Ovary (tissue), 10 donors: ENCODE measurements at regions of chr12 and their contacts with region 1.

Region 1: GRCh38 chr12:97943364-97943763 is 480.8 kb downstream of the RMST start:
- DNase-seq: no peak
- H3K4me3 ChIP-seq: no peak overlapping the region
- H3K27ac ChIP-seq: no peak overlapping the region
- H3K4me1 ChIP-seq: no peaks in the 10 kb centered on the region
- H3K27me3 ChIP-seq: no peaks in the 10 kb centered on the region
- CTCF ChIP-seq: no peak
- EP300 ChIP-seq: no peak
- POLR2A ChIP-seq: no peak

Region 2: GRCh38 chr12:96729886-96730285 is 1213.5 kb before region 1 on chr12:
- intact Hi-C with region 1: loop called in 1 of 4 experiments (anchors 5 kb)
- DNase-seq: no peak
- H3K4me3 ChIP-seq: no peak overlapping the region
- H3K27ac ChIP-seq: no peak overlapping the region
- H3K4me1 ChIP-seq: no peaks in the 10 kb centered on the region
- H3K27me3 ChIP-seq: no peaks in the 10 kb centered on the region
- CTCF ChIP-seq: no peak
- EP300 ChIP-seq: no peak
- POLR2A ChIP-seq: no peak